ENCODE measurements at regions of chr17 and their contacts with region 1.

Region 1: DNA sequence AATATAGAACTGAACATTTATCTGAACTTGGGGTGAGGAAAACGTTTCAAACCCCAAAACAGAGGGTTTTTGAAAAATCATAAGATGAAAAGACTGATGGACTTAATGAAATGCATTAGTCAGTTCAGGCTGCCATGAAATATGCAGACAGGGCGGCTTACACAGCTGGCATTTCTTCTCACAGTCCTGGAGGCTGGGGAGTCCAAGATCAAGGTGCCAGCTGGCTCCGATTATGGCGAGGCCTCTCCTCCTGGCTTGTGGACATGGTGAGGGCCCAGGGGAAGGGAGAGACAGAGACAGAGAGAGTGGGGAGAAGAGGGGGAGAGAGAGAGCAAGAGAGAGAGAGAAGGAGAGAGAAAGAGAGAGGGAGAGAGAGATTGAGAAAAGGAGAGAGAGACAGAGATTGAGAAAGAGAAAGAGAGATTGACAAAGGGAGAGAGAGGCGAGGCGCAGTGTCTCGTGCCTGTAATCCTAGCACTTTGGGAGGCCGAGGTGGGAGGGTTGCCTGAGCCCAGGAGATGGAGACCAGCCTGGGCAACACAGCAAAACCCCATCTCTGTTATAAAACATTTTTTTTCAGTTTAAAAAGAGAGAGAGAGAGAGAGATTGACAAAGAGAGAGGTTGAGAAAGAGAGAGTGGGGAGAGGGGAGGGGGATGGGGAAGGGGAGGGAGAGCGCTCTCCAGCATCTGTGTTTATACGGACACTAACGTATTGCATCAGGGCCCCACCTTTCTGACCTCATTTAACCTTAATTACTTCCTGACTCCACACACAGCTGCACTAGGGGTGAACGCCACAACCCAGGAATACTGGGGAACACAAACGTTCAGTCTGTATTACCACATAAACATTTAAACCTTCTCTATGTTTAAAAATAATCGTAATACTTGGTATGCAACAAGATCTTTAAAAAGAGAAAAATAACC is 24.6 kb upstream of the RPH3AL start:
- DNase-seq: peak in 3 of 5 donors; percentile 66 to 79 (median 68)
- ATAC-seq: peak in 3 of 4 donors; percentile 76 to 83 (median 77)
- H3K4me3 ChIP-seq: no peak overlapping the region
- H3K27ac ChIP-seq: peak overlapping the region in 6 of 12 donors; percentile 14 to 68 (median 38)
- H3K4me1 ChIP-seq: peaks cover 0 to 16% (median 1%) of the 10 kb centered on the region in 12 donors
- H3K27me3 ChIP-seq: peaks cover 0 to 5% (median 0%) of the 10 kb centered on the region in 9 donors
- CTCF ChIP-seq: no peak
- POLR2A ChIP-seq: no peak

Region 2: DNA sequence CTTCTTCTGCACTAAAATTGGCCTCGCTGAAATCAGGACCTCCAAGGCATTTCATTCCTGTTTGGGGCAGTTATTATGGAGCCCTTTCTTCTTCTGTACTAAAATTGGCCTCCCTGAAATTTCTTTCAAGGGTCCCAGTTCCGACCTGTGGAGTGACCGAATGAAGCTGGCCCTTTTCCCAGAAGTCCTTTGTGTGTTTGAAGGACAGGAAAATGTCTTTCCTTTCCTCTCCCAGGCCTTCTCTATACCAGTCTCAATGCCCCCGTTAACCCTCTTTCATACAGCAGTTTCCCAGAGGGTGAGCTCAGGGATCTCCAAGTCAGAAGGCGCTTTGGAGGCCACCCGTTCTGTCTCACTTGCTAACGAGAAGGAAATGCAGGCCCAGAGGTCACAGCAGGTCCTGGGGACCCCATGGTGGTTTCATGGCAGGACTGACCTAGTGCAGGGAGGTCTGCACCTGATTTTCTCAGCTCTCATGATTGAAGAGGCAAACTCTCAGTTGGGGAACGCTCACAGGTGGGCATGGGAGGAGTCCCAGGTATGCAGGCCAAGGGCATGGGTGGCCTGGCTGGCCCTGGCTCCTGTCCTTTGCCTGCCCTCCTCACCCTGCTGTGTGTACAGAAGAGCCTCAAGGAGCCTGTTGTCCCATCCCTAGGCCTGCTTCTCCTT is 158.6 kb before region 1 on chr17:
- intact Hi-C with region 1: no loop called
- DNase-seq: peak in 3 of 5 donors; percentile 11 to 18 (median 15)
- ATAC-seq: no peak
- H3K4me3 ChIP-seq: no peak overlapping the region
- H3K27ac ChIP-seq: no peak overlapping the region
- H3K4me1 ChIP-seq: peaks cover 0 to 14% (median 4%) of the 10 kb centered on the region in 12 donors
- H3K27me3 ChIP-seq: no peaks in the 10 kb centered on the region
- CTCF ChIP-seq: no peak
- POLR2A ChIP-seq: no peak

Region 3: GRCh38 chr17:266701-267667 is 110.2 kb before region 1 on chr17:
- intact Hi-C with region 1: loop called in 1 of 10 experiments (anchors 10 kb)
- DNase-seq: peak; percentile 72 to 82 (median 76)
- ATAC-seq: peak; percentile 84 to 95 (median 94)
- H3K4me3 ChIP-seq: peak overlapping the region in 4 of 12 donors; percentile 12 to 16 (median 14)
- H3K27ac ChIP-seq: peak overlapping the region; percentile 29 to 95 (median 79)
- H3K4me1 ChIP-seq: peaks cover 0 to 32% (median 20%) of the 10 kb centered on the region in 12 donors
- H3K27me3 ChIP-seq: no peaks in the 10 kb centered on the region
- CTCF ChIP-seq: peak in 1 of 12 donors; percentile 12
- POLR2A ChIP-seq: no peak

Region 4: DNA sequence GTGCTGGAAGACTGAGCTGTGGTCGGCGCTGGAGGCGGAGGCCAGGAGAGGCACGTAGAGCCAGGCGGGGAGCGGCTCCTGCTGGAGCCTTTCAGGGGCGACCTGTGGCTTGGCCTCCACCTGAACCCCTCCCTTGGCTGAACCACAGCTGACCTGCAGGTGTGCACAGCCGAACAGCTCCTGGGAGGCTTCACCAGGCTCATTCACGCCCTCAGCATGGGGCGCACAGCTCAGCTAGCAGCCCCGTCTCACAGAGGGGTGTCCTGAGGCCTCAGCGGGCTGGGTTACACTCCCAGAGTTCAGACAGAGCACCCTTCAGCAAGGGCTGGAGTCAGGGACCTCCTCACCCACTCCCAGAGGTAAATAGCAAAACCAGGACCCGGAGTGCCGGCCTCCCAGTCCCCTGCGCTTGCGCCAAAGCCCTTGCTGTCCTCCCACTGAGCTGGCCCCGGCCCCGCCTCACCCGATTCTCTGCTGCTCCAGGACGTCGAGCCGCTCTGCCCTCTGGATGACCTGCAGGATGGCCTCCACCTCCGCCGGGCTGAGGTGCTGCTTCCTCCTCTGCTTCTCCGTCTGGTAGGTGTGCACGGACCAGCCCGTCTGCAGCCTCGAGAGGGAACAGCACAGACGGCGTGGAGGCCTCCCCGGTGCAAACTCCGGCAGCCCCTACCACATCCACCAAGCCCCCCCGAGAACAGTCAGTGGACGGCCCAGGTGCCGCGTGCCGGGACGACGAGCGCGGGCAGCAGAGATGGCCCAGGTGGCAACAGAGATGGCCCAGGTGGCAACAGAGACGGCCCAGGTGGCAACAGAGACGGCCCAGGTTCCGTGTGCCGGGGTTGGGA is 56.2 kb before region 1 on chr17:
- intact Hi-C with region 1: no loop called
- DNase-seq: peak in 2 of 5 donors; percentile 24 to 66
- ATAC-seq: peak in 2 of 4 donors; percentile 13 to 30
- H3K4me3 ChIP-seq: no peak overlapping the region
- H3K27ac ChIP-seq: no peak overlapping the region
- H3K4me1 ChIP-seq: peaks cover 0 to 7% (median 0%) of the 10 kb centered on the region in 12 donors
- H3K27me3 ChIP-seq: peaks cover 0 to 25% (median 0%) of the 10 kb centered on the region in 9 donors
- CTCF ChIP-seq: no peak
- POLR2A ChIP-seq: no peak